ENCODE measurements at regions of chr1 and their contacts with region 1.

Region 1: GRCh38 chr1:155323798-155324610 is 3.3 kb downstream of the RUSC1 start:
- H3K4me3 ChIP-seq: peak overlapping the region; percentile 86
- H3K27ac ChIP-seq: peak overlapping the region; percentile 85
- H3K4me1 ChIP-seq: 0 out of 2 replicates have a peak, but pooled peaks cover 3% of the 10 kb centered on the region
- CTCF ChIP-seq: no peak

Region 2: DNA sequence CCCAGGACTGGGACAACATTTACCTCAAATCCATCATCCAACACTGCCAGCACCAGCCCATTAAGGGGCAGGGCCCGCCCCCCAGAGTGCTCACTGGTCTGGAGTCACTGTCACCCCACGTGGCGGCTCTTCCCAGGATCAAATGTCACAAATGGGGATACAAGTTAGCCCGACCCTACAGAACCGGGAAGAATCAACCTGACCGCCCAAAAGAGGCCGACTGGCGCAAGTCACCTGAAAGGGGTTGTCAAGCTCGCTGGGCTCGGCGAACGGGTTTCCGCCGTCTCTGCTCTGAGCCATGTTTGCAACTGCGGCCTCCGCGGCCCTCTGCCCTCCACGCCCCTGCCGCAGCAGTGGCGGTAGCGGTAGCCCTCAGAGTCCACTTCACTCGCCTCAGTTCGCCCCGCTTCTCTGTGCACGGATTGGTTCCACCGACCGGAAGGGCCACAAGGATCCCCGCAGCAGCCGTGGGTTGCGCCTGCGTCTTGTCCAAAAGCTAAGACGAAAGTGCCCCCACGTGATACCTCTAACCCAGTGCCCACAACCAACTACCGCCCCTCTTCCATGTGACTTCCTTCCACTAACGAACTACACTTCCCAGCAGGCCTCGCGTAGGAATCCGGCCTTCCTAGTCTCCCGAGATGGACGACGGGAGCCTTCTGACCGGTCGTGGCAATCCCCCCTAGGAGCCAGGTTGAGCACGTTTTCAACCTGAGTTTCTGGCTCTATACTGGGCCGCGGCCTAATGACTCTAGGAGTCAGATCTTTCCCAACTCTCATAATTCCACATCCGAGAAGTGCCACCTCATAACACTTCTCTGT is 61.9 kb before region 1 on chr1 and contains the start of gene SCAMP3:
- CTCF ChIA-PET with region 1: interaction called, 5 read pairs
- POLR2A ChIA-PET with region 1: interaction called, 23 read pairs
- H3K4me3 ChIP-seq: peak within 1 kb of the TSS; percentile 91
- H3K27ac ChIP-seq: peak within 1 kb of the TSS; percentile 61
- H3K4me1 ChIP-seq: no peaks in the 10 kb centered on the region
- CTCF ChIP-seq: no peak

Region 3: GRCh38 chr1:155308493-155309422 is 15.2 kb before region 1 on chr1 and contains the start of gene FDPS:
- CTCF ChIA-PET with region 1: interaction called, 15 read pairs
- POLR2A ChIA-PET with region 1: interaction called, 9 read pairs
- H3K4me3 ChIP-seq: peak within 1 kb of the TSS; percentile 67
- H3K27ac ChIP-seq: peak within 1 kb of the TSS; percentile 88
- H3K4me1 ChIP-seq: peaks cover 5% of the 10 kb centered on the region; the same call in 1 of the 2 replicates
- CTCF ChIP-seq: no peak